Activated naive CD4-positive, alpha-beta T cell treated with anti-CD3 and anti-CD28 coated beads for 36 hours (primary cell): ENCODE measurements at regions of chr6 and their contacts with region 1.

Region 1: GRCh38 chr6:27753668-27754407 is 158.4 kb downstream of the OR2B2 start:
- DNase-seq: peak; percentile 88
- H3K4me3 Mint-ChIP-seq: peak overlapping the region; percentile 77
- H3K27ac Mint-ChIP-seq: peak overlapping the region; percentile 82
- H3K4me1 Mint-ChIP-seq: peaks cover 28% of the 10 kb centered on the region
- H3K27me3 Mint-ChIP-seq: no peaks in the 10 kb centered on the region

Region 2: DNA sequence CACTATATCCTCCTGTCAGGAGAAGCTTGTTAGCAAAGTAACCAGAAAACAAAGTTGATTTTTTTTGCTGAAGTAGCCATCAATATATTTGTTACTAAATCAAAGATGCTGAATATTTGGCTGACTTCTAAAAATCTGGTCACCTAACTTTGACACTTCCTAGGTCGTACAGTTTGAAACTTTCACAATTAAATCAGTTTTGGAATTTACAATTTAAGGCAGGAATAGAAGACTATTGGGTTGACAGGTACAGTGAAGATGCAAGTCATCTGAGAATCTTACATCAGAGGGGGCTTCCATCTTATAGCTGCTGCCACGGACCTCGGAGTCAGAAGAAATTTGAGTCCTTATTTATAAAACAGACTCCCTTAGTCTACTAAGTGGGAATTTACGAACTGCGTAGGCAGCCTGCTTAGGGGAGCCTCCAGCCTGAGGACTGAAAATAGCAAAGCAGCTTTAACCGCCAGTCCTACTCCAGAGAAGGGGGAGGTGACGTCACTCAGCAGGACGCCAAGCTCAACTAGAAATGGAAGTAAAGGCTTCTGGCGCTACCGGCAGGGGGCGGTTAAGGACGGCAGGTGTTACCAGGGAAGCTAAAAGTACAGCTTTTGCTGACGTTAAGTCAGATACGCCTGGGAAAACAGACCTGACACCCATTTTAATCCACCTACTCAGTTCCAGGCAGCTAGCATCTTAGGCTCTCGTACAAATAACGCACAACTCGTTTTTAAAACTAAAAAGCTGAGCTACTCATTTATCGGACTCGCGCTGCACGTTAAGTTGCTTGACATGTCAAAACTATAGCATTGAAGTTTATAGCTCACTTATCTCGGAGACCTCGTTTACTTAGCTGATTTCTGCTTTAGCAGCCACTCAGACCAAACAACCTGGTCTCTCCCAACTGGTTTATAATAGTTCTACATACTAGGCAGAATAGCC is 1727.7 kb before region 1 on chr6:
- CTCF ChIA-PET with region 1: no interaction called
- intact Hi-C with region 1: loop called (anchors 5 kb)
- DNase-seq: peak; percentile 98
- H3K4me3 Mint-ChIP-seq: peak overlapping the region; percentile 87
- H3K27ac Mint-ChIP-seq: peak overlapping the region; percentile 99
- H3K4me1 Mint-ChIP-seq: peaks cover 31% of the 10 kb centered on the region
- H3K27me3 Mint-ChIP-seq: no peaks in the 10 kb centered on the region

Region 3: GRCh38 chr6:27177485-27178406 is 576.1 kb before region 1 on chr6:
- CTCF ChIA-PET with region 1: interaction called, 3 read pairs
- intact Hi-C with region 1: loop called (anchors 1 kb)
- DNase-seq: peak; percentile 83
- H3K4me3 Mint-ChIP-seq: peak overlapping the region; percentile 92
- H3K27ac Mint-ChIP-seq: peak overlapping the region; percentile 87
- H3K4me1 Mint-ChIP-seq: peaks cover 4% of the 10 kb centered on the region
- H3K27me3 Mint-ChIP-seq: peaks cover 6% of the 10 kb centered on the region

Region 4: DNA sequence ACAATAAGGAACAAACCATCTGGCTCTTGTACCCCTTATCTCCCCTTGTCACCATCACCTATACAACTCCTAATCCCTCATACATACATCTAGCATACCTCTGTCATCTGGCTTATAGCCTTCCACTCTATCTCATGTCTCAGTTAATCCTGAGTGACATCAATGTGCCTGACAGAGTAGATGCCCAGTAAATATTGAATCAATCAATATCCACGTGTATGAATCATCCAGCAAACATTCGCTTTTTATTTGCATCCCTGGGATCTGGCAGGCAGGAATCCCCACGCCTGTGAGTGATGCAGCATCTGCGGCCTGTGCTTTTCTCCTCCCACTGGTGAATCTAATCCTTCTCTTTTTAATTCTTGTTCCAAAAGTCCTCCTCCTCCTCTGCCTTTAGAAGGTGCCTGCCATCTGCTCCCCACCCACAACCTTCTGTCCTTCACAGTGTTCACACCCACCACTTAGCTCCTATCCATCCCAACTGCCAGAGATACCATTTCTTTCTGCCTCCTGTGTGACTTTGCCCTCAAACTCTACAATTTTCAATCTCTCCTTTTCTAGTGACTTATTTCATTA is 327.7 kb before region 1 on chr6:
- CTCF ChIA-PET with region 1: no interaction called
- intact Hi-C with region 1: no loop called
- DNase-seq: no peak
- H3K4me3 Mint-ChIP-seq: no peak overlapping the region
- H3K27ac Mint-ChIP-seq: no peak overlapping the region
- H3K4me1 Mint-ChIP-seq: no peaks in the 10 kb centered on the region
- H3K27me3 Mint-ChIP-seq: peaks cover 11% of the 10 kb centered on the region

Region 5: GRCh38 chr6:27472617-27473400 is 281.0 kb before region 1 on chr6 and contains the start of gene ZNF184:
- CTCF ChIA-PET with region 1: no interaction called
- intact Hi-C with region 1: loop called (anchors 1 kb)
- DNase-seq: peak; percentile 91
- H3K4me3 Mint-ChIP-seq: peak within 1 kb of the TSS; percentile 95
- H3K27ac Mint-ChIP-seq: peak within 1 kb of the TSS; percentile 95
- H3K4me1 Mint-ChIP-seq: peaks cover 45% of the 10 kb centered on the region
- H3K27me3 Mint-ChIP-seq: no peaks in the 10 kb centered on the region
- total RNA-seq, gene ZNF184: 13.0 to 14.3 TPM

Region 6: DNA sequence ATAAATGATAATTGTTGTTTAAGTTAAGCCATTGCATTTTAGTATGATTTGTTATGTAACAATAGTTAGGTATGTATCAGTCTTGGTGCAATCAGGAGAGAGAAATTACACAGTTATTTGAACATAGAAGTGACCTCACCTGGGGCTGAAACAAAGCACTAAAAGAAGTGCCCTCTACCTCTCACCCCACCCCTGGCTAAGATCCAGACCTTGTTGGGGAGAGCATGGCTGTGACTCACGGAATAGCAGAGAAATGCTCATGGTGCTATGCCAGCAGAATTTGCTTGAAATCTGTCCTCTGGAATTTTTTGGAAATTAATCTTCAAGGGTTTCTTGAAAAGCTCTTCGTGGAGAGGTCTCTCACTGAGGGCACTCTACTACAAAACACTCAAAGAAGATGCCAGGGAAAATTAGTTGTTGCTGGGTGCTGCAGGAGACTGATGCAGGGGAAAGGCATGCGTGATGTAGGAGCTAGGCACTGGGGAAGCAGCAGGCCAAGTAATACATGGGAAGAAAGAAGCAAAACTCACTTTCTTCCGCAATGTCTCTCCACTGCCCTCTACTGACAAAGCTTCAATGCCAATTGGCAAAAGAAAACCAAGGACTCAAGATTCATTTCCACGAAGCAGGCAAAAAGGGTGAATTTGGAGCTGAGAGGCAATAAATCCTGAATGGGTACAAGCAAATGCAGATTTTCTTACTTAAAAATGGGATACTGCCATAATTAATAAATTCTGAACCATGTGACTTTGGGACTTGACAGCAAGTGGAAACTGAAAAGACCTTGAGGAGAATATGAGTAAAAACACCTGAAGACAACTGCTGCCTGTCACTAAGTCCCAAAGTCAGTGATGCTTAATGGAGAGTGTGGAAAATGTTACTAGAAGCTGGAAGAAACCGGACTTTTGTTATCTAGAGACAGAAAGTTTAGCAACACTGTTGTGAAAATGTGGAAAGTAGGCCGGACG is 144.6 kb before region 1 on chr6:
- CTCF ChIA-PET with region 1: no interaction called
- intact Hi-C with region 1: loop called (anchors 5 kb)
- DNase-seq: peak; percentile 30
- H3K4me3 Mint-ChIP-seq: no peak overlapping the region
- H3K27ac Mint-ChIP-seq: no peak overlapping the region
- H3K4me1 Mint-ChIP-seq: peaks cover 13% of the 10 kb centered on the region
- H3K27me3 Mint-ChIP-seq: peaks cover 51% of the 10 kb centered on the region

Region 7: DNA sequence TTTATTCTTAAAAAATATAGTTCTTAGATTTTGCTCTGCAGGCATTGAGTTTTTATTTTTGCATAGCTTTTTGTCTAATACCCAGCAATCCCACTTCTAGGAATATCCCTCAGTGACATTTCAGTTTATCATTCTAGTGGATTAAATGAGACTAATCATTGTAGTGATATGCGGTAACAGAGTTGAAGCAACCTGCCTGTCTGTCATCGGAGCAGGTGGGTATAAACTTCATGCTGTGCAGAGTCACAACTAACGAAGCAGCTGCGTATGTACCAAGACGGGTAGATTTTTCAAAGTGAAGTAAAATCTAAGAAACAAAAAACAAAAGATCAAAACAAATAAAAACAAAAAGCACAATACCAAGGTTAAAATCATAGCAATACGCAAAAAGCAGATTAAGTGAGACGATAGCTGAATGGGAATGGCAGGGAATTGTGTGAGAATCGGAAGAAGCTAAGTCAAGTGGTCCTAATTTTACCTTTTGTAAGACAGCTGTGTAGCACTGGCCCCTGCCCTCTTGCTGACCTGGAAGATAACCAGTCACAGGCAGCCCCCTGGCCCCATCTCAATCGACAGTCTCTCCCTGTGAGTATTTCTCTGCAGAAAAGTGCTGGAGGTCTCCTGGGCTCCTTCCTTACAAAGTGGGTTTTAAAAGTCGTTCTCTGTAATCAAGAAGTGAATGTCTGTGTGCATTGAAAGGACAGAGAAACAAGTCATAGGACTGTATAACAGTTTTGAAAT is 10.8 kb before region 1 on chr6:
- CTCF ChIA-PET with region 1: interaction called, 6 read pairs
- intact Hi-C with region 1: loop called (anchors 1 kb)
- DNase-seq: no peak
- H3K4me3 Mint-ChIP-seq: no peak overlapping the region
- H3K27ac Mint-ChIP-seq: no peak overlapping the region
- H3K4me1 Mint-ChIP-seq: peaks cover 16% of the 10 kb centered on the region
- H3K27me3 Mint-ChIP-seq: peaks cover 24% of the 10 kb centered on the region

Region 8: DNA sequence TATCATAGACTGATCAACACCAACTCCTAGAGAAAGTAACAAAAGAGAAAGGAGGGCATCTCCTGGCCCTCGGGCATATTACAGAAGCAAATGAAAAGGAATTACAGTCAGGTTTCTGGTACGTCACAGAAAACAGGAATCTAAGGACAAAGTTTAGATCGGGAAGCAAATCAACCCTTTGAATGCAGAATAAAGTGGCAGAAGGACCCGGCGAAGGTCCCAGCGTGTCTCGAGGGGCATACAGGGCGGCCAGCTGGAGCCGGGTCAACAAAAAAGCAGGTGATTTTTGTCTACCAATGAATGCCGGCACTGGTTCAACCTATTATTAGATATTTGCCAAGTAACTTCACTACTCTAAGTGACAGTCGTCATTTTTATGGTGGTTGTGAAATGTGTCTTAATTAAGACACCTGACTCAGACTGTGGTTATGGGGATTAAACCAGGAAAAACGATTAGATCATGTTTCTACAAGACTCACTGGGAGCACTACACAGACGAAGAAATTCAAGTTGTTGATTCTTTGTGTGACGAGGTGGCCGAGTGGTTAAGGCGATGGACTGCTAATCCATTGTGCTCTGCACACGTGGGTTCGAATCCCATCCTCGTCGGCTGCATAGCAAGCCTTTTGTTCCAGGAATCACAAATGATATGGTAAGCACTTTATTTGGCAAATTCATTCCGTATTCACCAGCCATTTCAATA is 458.8 kb after region 1 on chr6:
- CTCF ChIA-PET with region 1: no interaction called
- intact Hi-C with region 1: loop called (anchors 5 kb)
- DNase-seq: peak; percentile 86
- H3K4me3 Mint-ChIP-seq: peak overlapping the region; percentile 70
- H3K27ac Mint-ChIP-seq: peak overlapping the region; percentile 38
- H3K4me1 Mint-ChIP-seq: peaks cover 18% of the 10 kb centered on the region
- H3K27me3 Mint-ChIP-seq: peaks cover 72% of the 10 kb centered on the region